Activated CD8-positive, alpha-beta T cell treated with anti-CD3 and anti-CD28 coated beads, Interleukin-2, amount 10 ng/mL, durations not matched to agents 7 days and 5 days (primary cell): ENCODE measurements at regions of chr17 and their contacts with region 1.

Region 1: DNA sequence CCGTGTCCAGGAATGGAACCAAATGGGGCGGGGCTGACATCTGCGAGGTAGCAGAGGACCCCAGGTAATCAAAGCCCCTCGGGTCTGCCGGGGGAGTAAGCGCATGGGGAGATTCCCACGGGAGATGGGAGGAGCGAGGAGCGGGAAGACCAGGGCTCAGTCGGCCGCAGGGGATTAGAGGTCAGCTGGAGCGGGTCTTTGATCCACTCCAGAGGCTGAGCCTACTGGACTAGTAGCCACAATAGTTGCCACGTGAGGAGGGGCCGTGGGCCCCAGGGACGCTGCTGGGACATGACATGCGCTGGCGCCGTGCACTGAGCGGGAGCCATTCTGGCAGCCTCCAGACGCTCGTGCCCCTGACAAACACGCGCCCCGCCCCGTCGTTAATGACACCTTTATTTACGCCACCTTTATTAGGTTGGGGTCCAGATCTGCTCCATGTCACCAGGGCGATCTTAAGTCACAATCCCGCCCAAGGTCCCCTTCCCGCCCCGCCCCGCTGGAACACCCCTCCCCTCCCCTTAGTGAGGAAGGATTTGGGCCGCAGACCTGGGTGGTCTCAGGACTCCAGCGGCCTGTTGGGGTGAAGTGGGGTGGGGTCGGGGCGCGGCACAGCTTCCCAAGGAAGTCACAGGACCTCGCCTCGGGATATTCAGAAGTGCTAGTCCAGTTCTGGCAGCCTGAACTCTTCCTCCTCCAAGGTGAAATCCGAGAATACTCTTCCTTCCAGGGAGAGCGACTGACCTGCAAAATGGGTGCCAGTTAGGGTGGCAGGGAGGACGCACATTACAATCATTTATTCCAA is 15.0 kb downstream of the PPY start:
- DNase-seq: no peak
- ATAC-seq: no peak
- H3K4me3 Mint-ChIP-seq: peak overlapping the region; percentile 60
- H3K27ac Mint-ChIP-seq: peak overlapping the region; percentile 76
- H3K4me1 Mint-ChIP-seq: peaks cover 33% of the 10 kb centered on the region
- H3K27me3 Mint-ChIP-seq: peaks cover 12% of the 10 kb centered on the region

Region 2: GRCh38 chr17:43907425-43907981 is 19.8 kb before region 1 on chr17 and contains the start of gene MPP2:
- CTCF ChIA-PET with region 1: interaction called, 36 read pairs
- POLR2A ChIA-PET with region 1: no interaction called
- DNase-seq: peak; percentile 50
- ATAC-seq: peak; percentile 50
- H3K4me3 Mint-ChIP-seq: peak within 1 kb of the TSS; percentile 27
- H3K27ac Mint-ChIP-seq: no peak within 1 kb of the TSS
- H3K4me1 Mint-ChIP-seq: peaks cover 13% of the 10 kb centered on the region
- H3K27me3 Mint-ChIP-seq: peaks cover 46% of the 10 kb centered on the region
- total RNA-seq, gene MPP2: 1.2 to 1.8 TPM